ENCODE measurements at regions of chr21 and their contacts with region 1.

Region 1: GRCh38 chr21:45439161-45439872 is 34.4 kb downstream of the COL18A1 start:
- DNase-seq: peak; percentile 87
- ATAC-seq: peak; percentile 87 to 93
- H3K4me3 ChIP-seq: peak overlapping the region; percentile 38
- H3K27ac ChIP-seq: peak overlapping the region; percentile 85
- H3K4me1 ChIP-seq: peaks cover 13% of the 10 kb centered on the region
- H3K27me3 ChIP-seq: no peaks in the 10 kb centered on the region
- CTCF ChIP-seq: peak; percentile 100

Region 2: DNA sequence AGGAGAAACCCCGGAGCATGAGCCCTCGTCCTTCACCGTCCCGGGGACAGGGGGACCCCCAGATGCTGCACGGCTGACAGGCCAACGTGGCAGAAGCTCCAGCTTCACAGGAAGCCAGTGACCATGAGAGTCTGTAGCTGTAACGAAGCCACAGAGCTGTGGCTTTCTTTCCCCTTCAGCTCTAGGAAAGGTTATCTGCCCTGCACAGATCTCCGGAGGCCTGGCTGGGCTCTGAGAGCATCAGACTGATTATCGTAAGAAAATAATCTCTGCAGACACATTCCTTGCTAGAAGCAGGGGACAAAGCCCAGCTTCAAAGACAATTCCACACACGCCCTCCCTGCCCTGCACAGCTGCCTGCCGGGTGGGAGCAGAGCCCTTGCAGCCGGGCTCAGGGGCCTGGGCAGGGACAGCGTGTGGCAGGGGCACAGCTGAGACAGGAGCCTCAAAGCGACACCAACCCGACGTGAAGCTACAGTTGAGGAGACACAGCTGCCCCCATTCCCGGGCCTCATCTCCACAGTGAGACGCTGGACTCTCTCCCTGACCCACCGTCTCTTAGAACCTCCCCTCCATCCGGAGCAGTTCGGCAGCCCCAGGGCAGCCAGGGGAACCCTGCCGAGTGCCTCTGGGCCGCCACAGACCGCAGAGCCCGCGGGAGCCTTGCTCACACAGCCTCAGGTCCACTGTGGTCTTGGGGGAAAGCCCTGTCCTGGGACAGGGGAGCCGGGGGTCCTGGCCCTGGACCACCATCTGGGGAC is 182.2 kb before region 1 on chr21:
- intact Hi-C with region 1: no loop called
- DNase-seq: no peak
- ATAC-seq: peak; percentile 8 to 24
- H3K4me3 ChIP-seq: no peak overlapping the region
- H3K27ac ChIP-seq: no peak overlapping the region
- H3K4me1 ChIP-seq: peaks cover 10% of the 10 kb centered on the region
- H3K27me3 ChIP-seq: peaks cover 42% of the 10 kb centered on the region
- CTCF ChIP-seq: no peak

Region 3: GRCh38 chr21:45292399-45293219 is 146.7 kb before region 1 on chr21:
- intact Hi-C with region 1: loop called (anchors 10 kb)
- DNase-seq: peak; percentile 87
- ATAC-seq: peak; percentile 82 to 84
- H3K4me3 ChIP-seq: no peak overlapping the region
- H3K27ac ChIP-seq: peak overlapping the region; percentile 92
- H3K4me1 ChIP-seq: peaks cover 48% of the 10 kb centered on the region
- H3K27me3 ChIP-seq: no peaks in the 10 kb centered on the region
- CTCF ChIP-seq: peak; percentile 99

Region 4: GRCh38 chr21:45590246-45590725 is 151.0 kb after region 1 on chr21:
- intact Hi-C with region 1: no loop called
- DNase-seq: peak; percentile 79
- ATAC-seq: peak; percentile 78 to 92
- H3K4me3 ChIP-seq: peak overlapping the region; percentile 55
- H3K27ac ChIP-seq: peak overlapping the region; percentile 31
- H3K4me1 ChIP-seq: peaks cover 16% of the 10 kb centered on the region
- H3K27me3 ChIP-seq: peaks cover 16% of the 10 kb centered on the region
- CTCF ChIP-seq: no peak

Measured in lower lobe of right lung (tissue), 2 donors.